RWPE1 (cell line): ENCODE measurements at regions of chr12 and their contacts with region 1.

Region 1: GRCh38 chr12:43282106-43282505 is 269.9 kb downstream of the ADAMTS20 start:
- DNase-seq: peak; percentile 30
- H3K27ac ChIP-seq: no peak overlapping the region
- CTCF ChIP-seq: peak; percentile 57

Region 2: DNA sequence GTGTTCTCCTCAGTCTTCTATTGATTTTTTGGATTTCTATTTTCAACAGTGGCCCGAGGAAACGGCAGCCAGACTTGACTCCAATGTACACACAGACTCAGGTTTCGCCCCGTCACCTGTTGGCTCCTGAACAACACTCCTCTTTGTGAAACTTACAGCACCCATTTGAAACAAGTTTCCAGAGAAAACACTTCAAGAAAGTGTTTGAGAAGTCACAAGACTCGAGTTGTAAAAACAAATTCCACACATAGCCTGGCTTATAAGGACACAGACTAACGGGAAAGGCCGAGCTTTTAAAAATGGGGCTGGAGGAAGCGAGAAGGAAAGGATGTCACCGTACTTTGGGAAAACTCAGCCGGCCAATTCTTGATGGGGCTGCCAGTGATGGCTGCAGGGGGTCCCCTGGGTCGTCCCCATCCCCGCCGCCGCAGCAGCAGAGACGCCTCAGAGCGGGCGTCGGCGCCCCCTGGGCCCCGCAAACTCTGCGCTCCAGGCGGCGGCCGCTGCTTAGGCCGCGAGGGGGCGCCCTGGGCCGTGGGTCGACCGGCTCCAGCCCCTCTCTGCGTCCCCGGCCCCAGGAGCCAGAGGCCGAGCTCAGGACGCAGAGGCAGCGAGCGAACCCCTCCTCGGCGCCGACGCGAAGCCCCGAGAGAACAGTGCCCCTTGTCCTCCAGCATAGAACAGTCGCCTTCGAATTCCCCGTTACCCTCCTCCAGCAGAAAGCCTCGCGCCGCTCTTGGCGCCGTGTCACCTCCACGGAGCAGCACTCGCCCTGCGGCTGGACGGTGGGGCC is 799.5 kb before region 1 on chr12:
- CTCF ChIA-PET with region 1: interaction called, 12 read pairs
- POLR2A ChIA-PET with region 1: no interaction called
- DNase-seq: peak; percentile 80
- H3K27ac ChIP-seq: peak overlapping the region; percentile 70
- CTCF ChIP-seq: peak; percentile 95

Region 3: DNA sequence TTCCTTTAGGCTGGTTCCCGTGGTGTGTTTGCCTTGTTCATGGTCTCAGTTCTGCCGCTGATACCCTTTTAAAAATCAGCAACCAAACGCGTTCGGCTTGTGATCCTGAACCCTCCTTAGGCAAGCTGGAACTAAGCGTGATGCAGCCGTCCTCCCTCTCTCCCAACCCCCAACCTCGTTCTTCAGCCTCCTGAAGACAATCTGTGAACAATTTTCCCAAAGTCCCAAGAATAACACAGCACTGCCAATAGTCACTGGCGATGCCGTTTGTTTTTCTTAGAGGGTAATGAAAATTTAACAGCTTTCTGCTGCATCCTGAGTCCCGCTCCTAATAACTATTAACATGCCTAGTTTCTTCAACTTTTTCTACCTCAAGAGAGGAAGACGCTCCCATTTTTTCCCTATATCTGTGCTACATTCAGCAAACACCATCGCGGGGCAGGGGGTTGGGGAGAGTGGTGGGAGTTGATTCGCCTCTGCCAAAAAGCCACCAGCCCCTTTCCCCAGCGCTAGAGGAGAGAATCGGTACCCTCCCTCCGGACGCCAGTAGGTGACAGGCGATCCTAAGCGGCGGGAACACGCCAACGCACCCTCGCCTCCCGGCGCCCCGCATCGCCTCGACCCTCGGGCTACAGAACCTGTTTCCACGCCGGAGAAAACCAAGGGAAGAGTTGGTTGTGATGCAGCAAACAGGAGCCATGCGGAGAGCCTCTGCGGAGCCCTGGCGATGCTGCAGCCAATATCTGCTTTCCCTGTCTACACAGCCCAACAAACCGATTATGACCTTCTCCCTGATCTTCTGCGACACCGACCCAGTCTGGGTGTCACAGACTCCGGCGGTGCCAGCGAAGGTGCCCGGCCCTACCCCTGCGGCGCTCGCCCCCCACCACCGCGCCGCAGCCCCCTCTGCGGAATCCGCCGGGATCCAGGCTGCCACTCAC is 693.3 kb before region 1 on chr12:
- CTCF ChIA-PET with region 1: interaction called, 18 read pairs
- POLR2A ChIA-PET with region 1: no interaction called
- DNase-seq: peak; percentile 43
- H3K27ac ChIP-seq: peak overlapping the region; percentile 74
- CTCF ChIP-seq: peak; percentile 89